Caco-2 (cell line): ENCODE measurements at regions of chr4 and their contacts with region 1.

Region 1: DNA sequence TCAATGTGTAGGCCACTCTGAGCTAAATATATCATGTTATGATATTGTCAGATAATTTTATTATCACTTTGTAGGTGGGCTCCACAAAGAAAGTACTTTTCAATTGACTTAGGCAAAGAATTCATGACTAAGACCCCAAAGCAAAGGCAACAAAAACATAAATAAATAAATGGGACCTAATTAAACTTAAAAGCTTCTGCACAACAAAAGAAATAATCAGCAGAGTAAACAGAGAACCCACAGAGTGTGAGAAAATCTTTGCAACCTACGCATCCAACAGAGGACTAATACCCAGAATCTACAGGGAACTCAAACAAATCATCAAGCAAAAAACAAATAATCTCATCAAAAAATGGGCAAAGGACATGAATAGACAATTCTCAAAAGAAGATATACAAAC is 15.2 kb upstream of the PDLIM5 start:
- DNase-seq: no peak
- H3K4me3 ChIP-seq: no peak overlapping the region
- H3K4me3 Mint-ChIP-seq: no peak overlapping the region
- H3K27ac Mint-ChIP-seq: no peak overlapping the region
- H3K4me1 ChIP-seq: no peaks in the 10 kb centered on the region
- H3K4me1 Mint-ChIP-seq: no peaks in the 10 kb centered on the region
- H3K27me3 ChIP-seq: no peaks in the 10 kb centered on the region
- H3K27me3 Mint-ChIP-seq: no peaks in the 10 kb centered on the region
- CTCF ChIP-seq: no peak

Region 2: DNA sequence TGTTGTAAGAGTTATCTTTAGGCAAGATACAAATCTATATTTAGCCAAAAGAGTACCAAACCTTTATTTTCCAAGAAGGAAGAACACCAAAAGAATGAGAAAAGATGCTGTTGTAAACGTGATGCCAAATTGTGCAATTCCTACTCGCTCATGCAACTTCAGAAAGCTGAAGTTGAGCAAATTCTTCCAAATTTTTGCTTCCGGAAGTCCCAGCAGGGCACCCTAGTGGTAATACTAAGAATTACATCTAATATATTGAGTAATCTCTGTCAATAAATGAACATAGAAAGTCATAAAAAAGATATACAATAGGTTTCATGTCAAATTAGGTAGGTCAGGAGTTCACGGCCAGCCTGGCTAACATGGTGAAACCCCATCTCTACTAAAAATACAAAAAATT is 264.9 kb before region 1 on chr4:
- CTCF ChIA-PET with region 1: no interaction called
- POLR2A ChIA-PET with region 1: no interaction called
- intact Hi-C with region 1: no loop called
- DNase-seq: no peak
- H3K4me3 ChIP-seq: no peak overlapping the region
- H3K4me3 Mint-ChIP-seq: no peak overlapping the region
- H3K27ac Mint-ChIP-seq: no peak overlapping the region
- H3K4me1 ChIP-seq: no peaks in the 10 kb centered on the region
- H3K4me1 Mint-ChIP-seq: no peaks in the 10 kb centered on the region
- H3K27me3 ChIP-seq: no peaks in the 10 kb centered on the region
- H3K27me3 Mint-ChIP-seq: no peaks in the 10 kb centered on the region
- CTCF ChIP-seq: peak in 1 of 2 experiments; percentile 13

Region 3: GRCh38 chr4:94419956-94420355 is 16.6 kb before region 1 on chr4:
- CTCF ChIA-PET with region 1: no interaction called
- POLR2A ChIA-PET with region 1: no interaction called
- intact Hi-C with region 1: loop called (anchors 1 kb)
- DNase-seq: peak in 1 of 2 experiments; percentile 43
- H3K4me3 ChIP-seq: no peak overlapping the region
- H3K4me3 Mint-ChIP-seq: peak overlapping the region; percentile 3
- H3K27ac Mint-ChIP-seq: no peak overlapping the region
- H3K4me1 ChIP-seq: peaks cover 17% of the 10 kb centered on the region
- H3K4me1 Mint-ChIP-seq: no peaks in the 10 kb centered on the region
- H3K27me3 ChIP-seq: no peaks in the 10 kb centered on the region
- H3K27me3 Mint-ChIP-seq: no peaks in the 10 kb centered on the region
- CTCF ChIP-seq: no peak

Region 4: GRCh38 chr4:94486372-94486801 is 49.9 kb after region 1 on chr4:
- CTCF ChIA-PET with region 1: no interaction called
- POLR2A ChIA-PET with region 1: no interaction called
- intact Hi-C with region 1: no loop called
- DNase-seq: no peak
- H3K4me3 ChIP-seq: no peak overlapping the region
- H3K4me3 Mint-ChIP-seq: no peak overlapping the region
- H3K27ac Mint-ChIP-seq: no peak overlapping the region
- H3K4me1 ChIP-seq: peaks cover 8% of the 10 kb centered on the region; the same call in 1 of the 2 replicates
- H3K4me1 Mint-ChIP-seq: no peaks in the 10 kb centered on the region
- H3K27me3 ChIP-seq: no peaks in the 10 kb centered on the region
- H3K27me3 Mint-ChIP-seq: no peaks in the 10 kb centered on the region
- CTCF ChIP-seq: no peak